PC-3 (cell line): ENCODE measurements at regions of chr7 and their contacts with region 1.

Region 1: DNA sequence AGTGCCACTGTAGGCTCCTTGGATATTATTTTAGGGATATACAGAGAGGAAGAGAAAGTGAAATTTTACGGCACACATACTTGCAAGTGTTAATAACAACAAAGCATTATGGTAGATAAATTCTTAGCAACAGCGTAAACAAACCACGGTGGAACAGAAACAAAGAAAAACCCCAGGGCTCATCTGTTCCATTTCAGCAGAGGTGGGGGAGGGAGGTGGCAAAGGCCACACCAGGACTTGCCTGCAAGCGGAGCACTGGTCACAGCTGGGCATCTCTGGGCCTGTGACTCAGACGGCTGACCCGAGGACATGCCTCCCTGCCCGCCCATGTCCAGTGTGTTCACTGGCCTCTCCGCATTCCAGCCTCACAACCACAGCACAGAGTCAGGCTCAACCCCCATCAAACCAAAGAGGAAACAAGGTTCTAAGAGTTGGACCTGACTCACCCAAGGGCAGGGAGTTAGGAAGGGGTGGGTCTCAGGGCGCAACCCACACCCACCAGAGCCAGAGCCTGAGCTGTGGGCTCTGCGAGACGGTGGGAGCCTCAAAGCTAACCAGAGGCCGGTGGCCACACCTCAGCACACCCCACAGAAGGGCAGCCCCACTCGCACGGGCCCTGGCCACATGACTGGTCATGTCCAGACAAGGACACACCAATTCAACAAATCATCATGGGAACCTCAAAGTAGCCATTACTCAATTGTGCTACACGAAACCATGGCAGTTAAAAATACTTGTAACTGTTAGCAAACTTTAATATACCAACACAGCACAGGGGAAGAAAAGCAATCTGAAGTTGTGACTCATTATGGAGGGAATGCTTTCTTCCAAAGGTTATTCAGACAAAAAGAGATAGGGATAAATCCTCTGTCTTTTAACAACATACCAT is 10.7 kb downstream of the ESYT2 start:
- DNase-seq: peak; percentile 92
- ATAC-seq: peak; percentile 83
- H3K4me3 ChIP-seq: peak overlapping the region; percentile 67
- H3K27ac ChIP-seq: peak overlapping the region; percentile 99
- H3K4me1 ChIP-seq: peaks cover 59% of the 10 kb centered on the region
- H3K27me3 ChIP-seq: no peaks in the 10 kb centered on the region
- CTCF ChIP-seq: no peak

Region 2: DNA sequence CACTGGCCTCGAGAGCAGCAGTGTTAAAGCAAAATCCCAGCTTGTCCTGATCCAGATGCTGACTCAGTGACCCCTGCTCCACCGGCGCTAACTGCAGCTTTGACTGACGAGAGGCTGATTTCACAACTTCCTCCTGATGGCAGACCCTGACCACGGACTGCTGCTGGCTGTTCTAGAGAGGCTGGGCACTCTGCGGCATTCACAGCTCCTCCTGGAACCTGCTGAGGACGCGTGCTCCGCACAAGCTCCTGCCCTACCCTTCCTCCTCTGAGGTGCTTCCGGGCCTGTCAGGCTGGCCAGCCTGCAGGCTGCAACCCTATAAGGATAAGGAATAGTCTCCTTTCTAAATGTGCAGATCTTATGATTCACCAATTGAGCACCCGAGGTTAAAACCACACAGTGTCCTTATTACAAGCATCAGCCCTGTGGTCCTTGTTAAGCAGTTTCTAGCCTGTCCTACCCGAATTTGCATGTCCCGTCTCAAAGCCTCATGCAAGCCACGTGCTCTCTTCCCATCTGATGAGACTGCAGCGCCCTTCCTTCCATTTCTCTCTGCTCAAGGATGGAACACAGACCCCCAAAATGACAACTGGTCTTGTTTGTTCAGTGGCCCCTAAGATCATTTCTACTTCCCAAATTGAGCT is 78.4 kb before region 1 on chr7:
- CTCF ChIA-PET with region 1: no interaction called
- POLR2A ChIA-PET with region 1: interaction called, 3 read pairs
- intact Hi-C with region 1: loop called (anchors 2 kb)
- DNase-seq: peak; percentile 81
- ATAC-seq: peak; percentile 80
- H3K4me3 ChIP-seq: peak overlapping the region; percentile 40
- H3K27ac ChIP-seq: peak overlapping the region; percentile 94
- H3K4me1 ChIP-seq: peaks cover 31% of the 10 kb centered on the region
- H3K27me3 ChIP-seq: no peaks in the 10 kb centered on the region
- CTCF ChIP-seq: no peak

Region 3: DNA sequence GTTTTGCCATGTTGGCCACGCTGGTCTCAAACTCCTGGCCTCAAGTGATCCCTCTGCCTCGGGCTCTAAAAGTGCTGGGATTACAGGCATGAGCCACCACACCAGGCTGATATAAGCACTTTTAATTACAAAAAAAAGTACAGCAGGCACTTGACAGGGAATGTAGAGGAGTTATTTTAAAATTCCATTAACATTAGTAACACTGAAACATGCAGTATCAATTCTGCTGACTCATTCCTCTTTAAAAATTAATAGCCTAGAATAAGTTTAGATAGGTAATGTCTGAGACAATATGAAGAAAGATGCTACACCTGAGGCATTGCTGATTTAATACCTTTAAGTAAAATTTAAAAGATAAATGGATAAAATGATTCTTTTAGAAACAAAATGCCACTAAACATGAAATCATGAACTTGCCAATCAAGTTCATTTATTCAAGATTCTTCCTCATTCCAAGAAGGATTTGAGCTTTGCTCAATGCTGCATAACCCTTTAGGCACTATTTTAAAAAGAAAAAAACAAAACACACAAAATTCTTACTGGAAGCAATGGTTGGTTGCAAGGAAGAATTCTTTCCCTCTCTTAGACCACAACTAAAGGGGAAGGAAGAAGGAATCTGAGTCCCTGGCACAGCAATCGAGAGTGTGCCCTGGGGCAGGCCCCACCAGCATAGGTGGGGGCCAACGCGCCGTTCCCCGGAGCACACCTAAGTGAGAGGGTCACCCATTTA is 15.9 kb before region 1 on chr7:
- CTCF ChIA-PET with region 1: no interaction called
- POLR2A ChIA-PET with region 1: interaction called, 3 read pairs
- intact Hi-C with region 1: loop called (anchors 2 kb)
- DNase-seq: peak; percentile 68
- ATAC-seq: peak; percentile 78
- H3K4me3 ChIP-seq: 0 out of 2 replicates have a peak overlapping the region, but pooled peaks have one; percentile 28
- H3K27ac ChIP-seq: peak overlapping the region; percentile 67
- H3K4me1 ChIP-seq: peaks cover 19% of the 10 kb centered on the region
- H3K27me3 ChIP-seq: no peaks in the 10 kb centered on the region
- CTCF ChIP-seq: no peak

Region 4: GRCh38 chr7:158856883-158857668 is 38.5 kb after region 1 on chr7:
- CTCF ChIA-PET with region 1: no interaction called
- POLR2A ChIA-PET with region 1: interaction called, 3 read pairs
- intact Hi-C with region 1: loop called (anchors 2 kb)
- DNase-seq: no peak
- ATAC-seq: peak; percentile 23
- H3K4me3 ChIP-seq: peak overlapping the region; percentile 75
- H3K27ac ChIP-seq: 0 out of 2 replicates have a peak overlapping the region, but pooled peaks have one; percentile 8
- H3K4me1 ChIP-seq: peaks cover 28% of the 10 kb centered on the region
- H3K27me3 ChIP-seq: no peaks in the 10 kb centered on the region
- CTCF ChIP-seq: no peak

Region 5: DNA sequence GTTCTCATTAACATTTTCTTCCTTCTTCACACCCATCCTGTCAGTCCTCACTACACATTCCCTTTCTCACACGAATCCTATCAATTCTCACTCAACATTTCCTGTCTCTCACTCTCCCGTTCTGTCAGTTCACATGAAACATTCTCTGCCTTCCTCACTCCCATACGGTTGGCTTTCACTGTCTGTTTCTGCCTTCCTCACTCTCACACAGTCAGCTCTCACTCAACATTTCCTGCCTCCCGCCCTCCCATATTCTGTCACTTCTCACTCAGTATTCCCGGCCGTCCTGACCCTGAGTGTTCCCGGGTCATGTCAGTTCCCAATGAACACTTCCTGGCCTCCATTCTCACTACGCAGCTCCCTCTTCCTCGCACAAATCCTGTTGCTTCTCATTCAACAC is 99.2 kb after region 1 on chr7:
- CTCF ChIA-PET with region 1: no interaction called
- POLR2A ChIA-PET with region 1: no interaction called
- intact Hi-C with region 1: no loop called
- DNase-seq: no peak
- ATAC-seq: no peak
- H3K4me3 ChIP-seq: no peak overlapping the region
- H3K27ac ChIP-seq: no peak overlapping the region
- H3K4me1 ChIP-seq: no peaks in the 10 kb centered on the region
- H3K27me3 ChIP-seq: no peaks in the 10 kb centered on the region
- CTCF ChIP-seq: no peak

Region 6: DNA sequence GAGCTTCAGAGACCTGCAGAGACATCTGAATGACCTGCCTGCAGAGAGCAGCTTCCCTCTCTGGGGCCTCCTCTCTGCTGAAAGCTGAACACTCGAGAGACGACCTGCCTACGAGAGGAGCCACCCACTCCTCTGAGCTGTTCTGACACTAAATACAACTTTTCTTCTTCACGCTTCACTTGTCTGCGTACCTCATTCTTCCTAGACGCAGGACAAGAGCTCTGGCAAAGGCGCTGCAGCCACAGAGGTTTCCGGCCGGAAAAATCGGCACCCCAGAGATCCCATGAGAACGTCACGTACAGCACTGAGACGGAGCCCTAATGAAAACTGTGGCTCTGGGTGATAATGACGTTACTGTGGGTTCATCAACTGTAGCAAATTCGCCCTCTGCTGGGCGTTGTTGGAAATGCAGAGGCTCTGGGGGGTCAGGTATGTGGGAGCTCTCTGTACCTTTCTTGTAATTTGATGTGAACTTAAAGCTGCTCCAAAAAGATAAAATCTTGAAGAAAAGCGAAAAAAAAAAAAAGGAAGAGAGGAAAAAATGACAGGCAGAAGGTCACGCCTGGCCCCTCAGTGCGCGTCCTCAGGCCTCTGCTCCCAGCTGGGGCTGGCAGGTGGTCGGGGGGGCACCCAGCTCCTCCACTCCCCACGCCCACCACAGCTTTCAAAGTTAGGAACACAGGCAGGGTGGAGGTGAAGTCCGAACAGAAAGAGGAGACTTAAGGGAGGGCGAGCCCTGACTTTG is 158.5 kb after region 1 on chr7:
- CTCF ChIA-PET with region 1: no interaction called
- POLR2A ChIA-PET with region 1: no interaction called
- intact Hi-C with region 1: loop called (anchors 10 kb)
- DNase-seq: peak; percentile 82
- ATAC-seq: peak; percentile 54
- H3K4me3 ChIP-seq: peak overlapping the region; percentile 62
- H3K27ac ChIP-seq: no peak overlapping the region
- H3K4me1 ChIP-seq: no peaks in the 10 kb centered on the region; the same call in 1 of the 2 replicates
- H3K27me3 ChIP-seq: no peaks in the 10 kb centered on the region
- CTCF ChIP-seq: peak; percentile 88